Vagina (tissue), 2 donors: ENCODE measurements at regions of chr14 and their contacts with region 1.

Region 1: DNA sequence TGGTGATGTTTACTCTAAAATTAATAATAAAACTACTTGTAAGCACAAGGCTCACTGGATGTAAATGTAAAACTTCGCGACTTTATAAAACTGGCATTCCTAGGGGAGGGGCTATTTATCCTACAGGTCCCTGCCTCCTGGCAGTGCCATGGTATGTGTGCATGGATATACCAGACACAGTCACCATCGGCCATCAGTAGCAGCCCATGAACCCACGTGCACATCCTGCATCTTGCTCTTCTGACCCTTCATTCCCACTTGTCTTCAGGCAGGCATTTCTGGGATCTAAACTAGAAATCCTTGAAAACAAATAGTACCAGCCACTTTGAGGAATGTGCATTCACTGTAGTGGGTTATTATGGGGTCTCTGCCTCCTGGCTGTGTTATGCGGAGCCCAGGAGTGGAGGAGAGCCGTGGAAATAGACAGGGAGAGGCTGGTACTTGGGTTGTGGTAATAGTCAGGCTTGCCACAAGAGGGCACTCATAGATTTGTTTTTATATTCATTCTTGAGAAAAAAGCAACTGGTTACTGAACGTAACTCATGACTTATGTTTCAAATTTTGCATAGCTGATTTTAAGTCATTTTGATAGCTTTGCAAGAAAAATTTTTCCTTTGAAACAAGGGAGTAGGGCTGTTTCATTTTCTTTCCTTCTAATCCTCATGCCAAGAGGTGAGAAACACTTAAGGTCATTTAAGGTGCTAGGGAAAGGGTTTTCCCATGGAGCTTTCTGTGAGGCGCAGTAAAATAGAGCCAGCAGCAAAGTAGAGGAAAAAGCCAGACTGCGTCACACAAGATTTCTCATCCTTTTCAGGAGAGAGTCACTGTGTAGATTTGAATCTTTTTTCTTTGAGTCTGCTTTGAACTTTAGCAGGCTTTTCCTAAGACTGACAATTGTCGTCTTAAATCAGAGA is 17.4 kb upstream of the GALNT16 start:
- DNase-seq: no peak
- H3K4me3 ChIP-seq: no peak overlapping the region
- H3K27ac ChIP-seq: peak overlapping the region; percentile 55
- H3K4me1 ChIP-seq: peaks cover 11% of the 10 kb centered on the region
- H3K27me3 ChIP-seq: no peaks in the 10 kb centered on the region
- CTCF ChIP-seq: peak; percentile 75 to 90 (median 89)
- POLR2A ChIP-seq: no peak

Region 2: GRCh38 chr14:69363055-69363454 is 120.5 kb after region 1 on chr14:
- intact Hi-C with region 1: loop called (anchors 10 kb)
- DNase-seq: no peak
- H3K4me3 ChIP-seq: no peak overlapping the region
- H3K27ac ChIP-seq: no peak overlapping the region
- H3K4me1 ChIP-seq: no peaks in the 10 kb centered on the region
- H3K27me3 ChIP-seq: no peaks in the 10 kb centered on the region
- CTCF ChIP-seq: no peak
- POLR2A ChIP-seq: no peak

Region 3: GRCh38 chr14:69460093-69460701 is 217.6 kb after region 1 on chr14:
- intact Hi-C with region 1: loop called (anchors 10 kb)
- DNase-seq: no peak
- H3K4me3 ChIP-seq: no peak overlapping the region
- H3K27ac ChIP-seq: no peak overlapping the region
- H3K4me1 ChIP-seq: no peaks in the 10 kb centered on the region
- H3K27me3 ChIP-seq: no peaks in the 10 kb centered on the region
- CTCF ChIP-seq: peak; percentile 36 to 92 (median 81)
- POLR2A ChIP-seq: no peak